Naive thymus-derived CD4-positive, alpha-beta T cell (primary cell): ENCODE measurements at regions of chrX and their contacts with region 1.

Region 1: GRCh38 chrX:79081895-79082512 is 62.5 kb upstream of the GPR174 start:
- DNase-seq: peak in 7 of 9 donors; percentile 35 to 78 (median 67)
- ATAC-seq: peak; percentile 92
- H3K4me3 ChIP-seq: peak overlapping the region; percentile 25
- H3K4me3 Mint-ChIP-seq: peak overlapping the region; percentile 54 to 87 (median 72)
- H3K27ac ChIP-seq: peak overlapping the region; percentile 54
- H3K27ac Mint-ChIP-seq: peak overlapping the region; percentile 79 to 97 (median 87)
- H3K4me1 ChIP-seq: peaks cover 5 to 9% of the 10 kb centered on the region in 2 donors
- H3K4me1 Mint-ChIP-seq: peaks cover 4 to 52% (median 25%) of the 10 kb centered on the region in 7 donors
- H3K27me3 ChIP-seq: no peaks in the 10 kb centered on the region
- H3K27me3 Mint-ChIP-seq: no peaks in the 10 kb centered on the region

Region 2: GRCh38 chrX:78119521-78120227 is 962.3 kb before region 1 on chrX:
- CTCF ChIA-PET with region 1: no interaction called
- POLR2A ChIA-PET with region 1: no interaction called
- intact Hi-C with region 1: loop called in 1 of 2 experiments (anchors 1 kb)
- DNase-seq: no peak
- ATAC-seq: peak; percentile 45
- H3K4me3 ChIP-seq: no peak overlapping the region
- H3K4me3 Mint-ChIP-seq: peak overlapping the region in 1 of 10 donors; percentile 12
- H3K27ac ChIP-seq: peak overlapping the region; percentile 27
- H3K27ac Mint-ChIP-seq: peak overlapping the region in 6 of 9 donors; percentile 11 to 84 (median 28)
- H3K4me1 ChIP-seq: peaks cover 0 to 25% of the 10 kb centered on the region in 2 donors
- H3K4me1 Mint-ChIP-seq: peaks cover 26 to 70% (median 56%) of the 10 kb centered on the region in 7 donors
- H3K27me3 ChIP-seq: no peaks in the 10 kb centered on the region
- H3K27me3 Mint-ChIP-seq: no peaks in the 10 kb centered on the region

Region 3: DNA sequence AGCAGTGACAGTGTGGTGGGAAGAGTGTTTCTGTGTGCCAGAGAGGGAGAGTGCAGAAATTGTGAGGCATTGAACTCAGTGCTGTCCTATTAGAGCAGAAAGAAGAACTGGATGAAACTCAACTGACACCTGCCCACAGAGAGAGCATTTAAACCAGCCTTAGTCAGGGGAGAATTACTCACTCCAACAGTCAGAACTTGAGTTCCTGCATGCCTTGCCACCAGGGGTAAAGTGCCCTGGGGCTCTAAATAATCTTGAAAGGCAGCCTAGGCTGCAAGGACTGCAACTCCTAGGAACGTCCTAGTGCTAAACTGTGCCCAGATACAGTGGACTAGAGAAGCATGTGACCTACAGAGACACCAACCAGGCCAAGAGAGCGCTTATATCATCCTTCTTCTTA is 767.4 kb before region 1 on chrX:
- CTCF ChIA-PET with region 1: no interaction called
- POLR2A ChIA-PET with region 1: no interaction called
- intact Hi-C with region 1: no loop called
- DNase-seq: no peak
- ATAC-seq: peak; percentile 32
- H3K4me3 ChIP-seq: no peak overlapping the region
- H3K4me3 Mint-ChIP-seq: peak overlapping the region in 5 of 10 donors; percentile 1 to 69 (median 25)
- H3K27ac ChIP-seq: no peak overlapping the region
- H3K27ac Mint-ChIP-seq: peak overlapping the region in 5 of 9 donors; percentile 49 to 81 (median 73)
- H3K4me1 ChIP-seq: no peaks in the 10 kb centered on the region
- H3K4me1 Mint-ChIP-seq: peaks cover 30 to 87% (median 63%) of the 10 kb centered on the region in 7 donors
- H3K27me3 ChIP-seq: no peaks in the 10 kb centered on the region
- H3K27me3 Mint-ChIP-seq: no peaks in the 10 kb centered on the region

Region 4: DNA sequence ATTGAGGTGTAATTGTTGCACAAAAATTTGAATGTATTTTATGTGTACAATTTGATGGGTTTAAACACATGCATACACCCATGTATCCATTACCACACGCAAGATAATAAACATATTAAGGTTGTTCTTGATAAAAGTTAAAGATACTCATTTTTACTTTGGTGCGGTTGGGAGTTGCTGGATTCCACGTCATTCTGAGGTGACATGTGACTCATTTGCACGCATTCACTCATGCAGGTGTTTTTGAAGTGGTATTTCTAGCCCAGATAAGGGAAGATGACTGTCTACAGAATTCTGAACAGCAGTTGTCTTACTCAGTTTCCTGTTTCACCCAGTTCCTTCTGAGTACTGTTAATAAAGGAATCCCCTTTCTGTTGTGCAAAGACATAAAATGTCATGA is 564.9 kb before region 1 on chrX:
- CTCF ChIA-PET with region 1: no interaction called
- POLR2A ChIA-PET with region 1: no interaction called
- intact Hi-C with region 1: loop called in 1 of 2 experiments (anchors 2 kb)
- DNase-seq: peak in 8 of 9 donors; percentile 37 to 92 (median 84)
- ATAC-seq: peak; percentile 95
- H3K4me3 ChIP-seq: no peak overlapping the region
- H3K4me3 Mint-ChIP-seq: peak overlapping the region in 9 of 10 donors; percentile 16 to 73 (median 67)
- H3K27ac ChIP-seq: peak overlapping the region; percentile 72
- H3K27ac Mint-ChIP-seq: peak overlapping the region; percentile 90 to 97 (median 92)
- H3K4me1 ChIP-seq: peaks cover 16 to 25% of the 10 kb centered on the region in 2 donors
- H3K4me1 Mint-ChIP-seq: peaks cover 2 to 58% (median 39%) of the 10 kb centered on the region in 7 donors
- H3K27me3 ChIP-seq: no peaks in the 10 kb centered on the region
- H3K27me3 Mint-ChIP-seq: no peaks in the 10 kb centered on the region

Region 5: DNA sequence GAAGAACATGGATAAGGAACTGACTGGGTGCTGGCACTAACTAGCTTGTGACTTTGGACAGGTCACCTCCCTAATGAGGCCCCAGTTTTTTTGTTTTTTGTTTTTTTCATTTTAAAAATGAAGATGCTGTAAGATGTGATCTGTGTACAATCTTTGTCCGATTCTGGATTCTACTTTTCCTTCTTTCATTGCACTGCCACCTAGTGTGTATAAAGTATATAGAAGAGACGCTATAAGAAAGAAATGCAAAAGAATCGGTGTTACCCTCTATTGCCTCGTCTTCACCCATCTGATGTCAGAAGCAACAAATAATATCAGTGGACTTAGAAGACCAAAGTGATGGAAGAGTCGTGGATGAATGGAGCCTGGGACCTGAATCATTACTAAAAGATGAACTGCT is 195.5 kb before region 1 on chrX:
- CTCF ChIA-PET with region 1: no interaction called
- POLR2A ChIA-PET with region 1: no interaction called
- intact Hi-C with region 1: loop called (anchors 1 to 5 kb)
- DNase-seq: peak in 6 of 9 donors; percentile 2 to 33 (median 18)
- ATAC-seq: peak; percentile 67
- H3K4me3 ChIP-seq: no peak overlapping the region
- H3K4me3 Mint-ChIP-seq: peak overlapping the region in 3 of 10 donors; percentile 0 to 46 (median 38)
- H3K27ac ChIP-seq: no peak overlapping the region
- H3K27ac Mint-ChIP-seq: peak overlapping the region in 5 of 9 donors; percentile 6 to 51 (median 13)
- H3K4me1 ChIP-seq: peaks cover 0 to 4% of the 10 kb centered on the region in 2 donors
- H3K4me1 Mint-ChIP-seq: peaks cover 4 to 11% (median 9%) of the 10 kb centered on the region in 7 donors
- H3K27me3 ChIP-seq: no peaks in the 10 kb centered on the region
- H3K27me3 Mint-ChIP-seq: no peaks in the 10 kb centered on the region

Region 6: GRCh38 chrX:79036157-79036880 is 45.7 kb before region 1 on chrX:
- CTCF ChIA-PET with region 1: interaction called, 3 read pairs
- POLR2A ChIA-PET with region 1: interaction called, 4 read pairs
- intact Hi-C with region 1: loop called in 1 of 2 experiments (anchors 2 kb)
- DNase-seq: peak in 2 of 9 donors; percentile 0 to 5
- ATAC-seq: no peak
- H3K4me3 ChIP-seq: no peak overlapping the region
- H3K4me3 Mint-ChIP-seq: peak overlapping the region in 4 of 10 donors; percentile 8 to 46 (median 23)
- H3K27ac ChIP-seq: no peak overlapping the region
- H3K27ac Mint-ChIP-seq: peak overlapping the region in 3 of 9 donors; percentile 23 to 63 (median 32)
- H3K4me1 ChIP-seq: no peaks in the 10 kb centered on the region
- H3K4me1 Mint-ChIP-seq: peaks cover 0 to 38% (median 26%) of the 10 kb centered on the region in 7 donors
- H3K27me3 ChIP-seq: no peaks in the 10 kb centered on the region
- H3K27me3 Mint-ChIP-seq: no peaks in the 10 kb centered on the region

Region 7: GRCh38 chrX:79146640-79147390 is 64.8 kb after region 1 on chrX:
- CTCF ChIA-PET with region 1: interaction called, 8 read pairs
- POLR2A ChIA-PET with region 1: interaction called, 6 read pairs
- intact Hi-C with region 1: loop called in 1 of 2 experiments (anchors 2 kb)
- DNase-seq: no peak
- ATAC-seq: peak; percentile 64
- H3K4me3 ChIP-seq: peak overlapping the region; percentile 71
- H3K4me3 Mint-ChIP-seq: peak overlapping the region; percentile 66 to 96 (median 92)
- H3K27ac ChIP-seq: peak overlapping the region; percentile 85
- H3K27ac Mint-ChIP-seq: peak overlapping the region; percentile 82 to 98 (median 91)
- H3K4me1 ChIP-seq: peaks cover 10 to 16% of the 10 kb centered on the region in 2 donors
- H3K4me1 Mint-ChIP-seq: peaks cover 10 to 47% (median 28%) of the 10 kb centered on the region in 7 donors
- H3K27me3 ChIP-seq: no peaks in the 10 kb centered on the region
- H3K27me3 Mint-ChIP-seq: no peaks in the 10 kb centered on the region

Region 8: GRCh38 chrX:79412972-79413371 is 331.0 kb after region 1 on chrX:
- CTCF ChIA-PET with region 1: interaction called, 6 read pairs
- POLR2A ChIA-PET with region 1: no interaction called
- intact Hi-C with region 1: loop called (anchors 1 to 2 kb)
- DNase-seq: peak in 7 of 9 donors; percentile 13 to 65 (median 39)
- ATAC-seq: no peak
- H3K4me3 ChIP-seq: peak overlapping the region; percentile 58
- H3K4me3 Mint-ChIP-seq: peak overlapping the region; percentile 58 to 85 (median 82)
- H3K27ac ChIP-seq: peak overlapping the region; percentile 68
- H3K27ac Mint-ChIP-seq: peak overlapping the region; percentile 46 to 92 (median 68)
- H3K4me1 ChIP-seq: peaks cover 0 to 3% of the 10 kb centered on the region in 2 donors
- H3K4me1 Mint-ChIP-seq: peaks cover 13 to 46% (median 27%) of the 10 kb centered on the region in 7 donors
- H3K27me3 ChIP-seq: no peaks in the 10 kb centered on the region
- H3K27me3 Mint-ChIP-seq: no peaks in the 10 kb centered on the region